Activated CD8-positive, alpha-beta T cell treated with anti-CD3 and anti-CD28 coated beads for 36 hours (primary cell): ENCODE measurements at regions of chr14 and their contacts with region 1.

Region 1: DNA sequence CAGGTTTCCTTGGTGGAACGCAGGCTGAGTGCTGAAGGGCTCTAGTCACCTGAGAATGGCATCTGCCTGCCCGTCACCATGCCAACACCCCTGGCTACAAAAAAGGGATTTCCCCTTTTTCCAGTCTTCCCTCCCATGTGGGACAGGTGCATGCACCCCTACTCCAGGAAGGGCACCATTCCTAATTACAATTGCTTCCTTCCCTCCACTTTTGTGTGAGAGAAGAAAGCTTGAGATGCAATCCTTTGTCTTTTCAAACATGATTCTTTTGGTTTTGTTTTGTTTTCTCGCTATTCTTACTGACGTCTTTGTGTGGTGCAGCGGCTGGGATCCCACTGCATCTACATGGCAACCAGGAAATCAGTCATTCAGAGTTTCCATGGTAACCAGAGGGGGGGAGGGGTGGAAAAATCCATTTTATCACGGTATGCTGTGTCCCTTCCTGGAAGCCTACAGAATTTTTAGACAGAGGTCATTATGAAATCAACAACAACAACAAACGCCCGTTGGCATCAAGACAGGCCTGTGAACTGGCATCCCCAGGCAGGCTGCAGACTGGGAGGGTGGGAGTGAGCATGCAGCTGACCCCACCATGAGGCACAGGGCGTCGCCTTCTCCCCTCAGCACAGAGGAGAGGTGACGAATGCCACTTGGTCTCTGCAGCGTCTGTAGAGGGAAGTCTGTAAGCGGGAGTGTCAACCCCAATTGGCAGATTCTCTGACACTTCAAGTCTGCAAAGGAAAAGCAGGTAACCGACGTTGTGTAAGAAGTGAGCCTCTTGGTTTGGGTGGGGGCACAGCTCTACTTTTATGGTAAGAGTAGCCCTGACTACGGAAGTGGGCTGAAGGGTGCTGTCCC is 13.6 kb upstream of the GNG2 start:
- DNase-seq: peak; percentile 95
- ATAC-seq: peak; percentile 76
- H3K4me3 Mint-ChIP-seq: peak overlapping the region; percentile 82
- H3K27ac Mint-ChIP-seq: peak overlapping the region; percentile 97
- H3K4me1 Mint-ChIP-seq: peaks cover 69% of the 10 kb centered on the region
- H3K27me3 Mint-ChIP-seq: no peaks in the 10 kb centered on the region
- CTCF ChIP-seq: no peak

Region 2: GRCh38 chr14:51816031-51816430 is 30.8 kb before region 1 on chr14:
- CTCF ChIA-PET with region 1: no interaction called
- POLR2A ChIA-PET with region 1: no interaction called
- intact Hi-C with region 1: no loop called
- DNase-seq: no peak
- ATAC-seq: no peak
- H3K4me3 Mint-ChIP-seq: no peak overlapping the region
- H3K27ac Mint-ChIP-seq: no peak overlapping the region
- H3K4me1 Mint-ChIP-seq: no peaks in the 10 kb centered on the region
- H3K27me3 Mint-ChIP-seq: no peaks in the 10 kb centered on the region
- CTCF ChIP-seq: no peak

Region 3: GRCh38 chr14:51860164-51860824 is 13.4 kb after region 1 on chr14 and contains the start of gene GNG2:
- CTCF ChIA-PET with region 1: interaction called, 7 read pairs
- POLR2A ChIA-PET with region 1: interaction called, 38 read pairs
- intact Hi-C with region 1: loop called (anchors 2 kb)
- DNase-seq: peak; percentile 91
- ATAC-seq: peak; percentile 95
- H3K4me3 Mint-ChIP-seq: peak within 1 kb of the TSS; percentile 98
- H3K27ac Mint-ChIP-seq: peak within 1 kb of the TSS; percentile 90
- H3K4me1 Mint-ChIP-seq: peaks cover 44% of the 10 kb centered on the region
- H3K27me3 Mint-ChIP-seq: no peaks in the 10 kb centered on the region
- CTCF ChIP-seq: no peak
- total RNA-seq, gene GNG2: 174 to 184 TPM

Region 4: DNA sequence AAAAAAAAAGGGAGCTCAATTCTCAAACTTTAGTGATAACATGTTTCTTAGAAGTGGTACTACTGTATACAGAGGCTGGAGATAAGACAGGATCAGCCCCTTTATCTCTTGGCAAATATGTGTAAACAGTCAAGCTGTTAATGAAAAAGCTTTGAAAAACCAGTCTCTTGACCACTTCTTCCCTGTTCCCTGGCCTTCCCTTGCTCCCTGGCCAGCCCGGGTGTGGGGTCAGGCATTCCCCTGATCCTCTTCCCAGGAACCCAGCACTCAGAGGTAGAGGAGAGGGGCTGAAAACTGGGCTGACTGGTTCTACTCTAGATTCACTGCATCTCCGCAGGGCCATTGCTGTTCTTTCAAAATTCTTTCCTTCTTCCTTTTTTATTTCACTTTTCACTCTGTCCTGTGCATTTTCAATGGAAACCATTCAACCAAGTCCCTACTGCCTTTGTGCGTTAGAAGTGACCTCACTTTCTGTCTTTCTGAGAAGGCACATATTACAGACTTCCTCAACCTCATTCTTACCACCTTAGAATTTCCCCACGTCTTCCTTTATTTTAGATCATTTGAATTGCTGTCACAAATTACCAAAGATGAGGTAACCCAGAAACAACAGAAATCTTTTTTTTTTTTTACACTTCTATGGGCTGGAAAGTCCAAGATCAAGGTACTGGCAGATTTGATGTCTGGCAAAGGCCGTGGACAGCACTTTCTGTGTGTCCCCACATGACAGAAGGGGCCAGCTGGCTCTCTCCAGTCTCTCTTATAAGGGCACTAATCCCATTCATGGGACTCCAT is 19.3 kb after region 1 on chr14:
- CTCF ChIA-PET with region 1: interaction called, 7 read pairs
- POLR2A ChIA-PET with region 1: interaction called, 38 read pairs
- intact Hi-C with region 1: loop called (anchors 2 kb)
- DNase-seq: peak; percentile 40
- ATAC-seq: peak; percentile 50
- H3K4me3 Mint-ChIP-seq: no peak overlapping the region
- H3K27ac Mint-ChIP-seq: no peak overlapping the region
- H3K4me1 Mint-ChIP-seq: peaks cover 22% of the 10 kb centered on the region
- H3K27me3 Mint-ChIP-seq: no peaks in the 10 kb centered on the region
- CTCF ChIP-seq: no peak

Region 5: DNA sequence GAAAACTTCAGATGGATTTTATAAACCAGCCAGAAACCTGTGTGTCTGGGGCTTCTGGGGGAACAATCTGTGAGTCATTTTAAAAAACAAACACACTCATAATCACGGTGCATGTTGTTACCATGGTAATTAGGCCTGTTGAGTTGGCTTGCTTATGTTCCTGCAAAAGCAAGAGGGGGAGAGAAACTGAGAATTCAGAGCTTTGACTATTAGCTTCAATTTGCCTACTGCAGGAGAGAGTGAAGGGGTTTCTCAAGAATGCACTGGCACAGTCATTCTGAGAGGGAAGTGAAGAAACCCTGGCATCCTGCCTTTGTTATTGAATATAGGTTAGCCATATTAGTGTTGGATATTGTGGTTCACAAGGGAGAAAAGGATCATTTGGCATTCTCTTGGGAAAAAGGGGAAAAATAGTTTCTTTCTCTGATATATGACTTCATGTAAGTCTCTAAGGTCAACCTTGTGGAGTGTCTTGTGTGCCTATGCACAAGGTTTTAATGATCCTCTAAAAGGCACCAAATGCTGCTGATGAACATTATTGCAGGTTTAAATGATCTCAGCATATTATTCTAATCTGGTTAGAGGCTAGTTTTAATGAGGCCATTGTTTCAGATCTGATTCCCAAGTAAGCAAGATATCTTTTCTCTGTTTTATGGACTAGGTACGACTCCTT is 26.5 kb after region 1 on chr14:
- CTCF ChIA-PET with region 1: interaction called, 5 read pairs
- POLR2A ChIA-PET with region 1: interaction called, 11 read pairs
- intact Hi-C with region 1: no loop called
- DNase-seq: peak; percentile 70
- ATAC-seq: peak; percentile 79
- H3K4me3 Mint-ChIP-seq: peak overlapping the region; percentile 30
- H3K27ac Mint-ChIP-seq: peak overlapping the region; percentile 91
- H3K4me1 Mint-ChIP-seq: peaks cover 66% of the 10 kb centered on the region
- H3K27me3 Mint-ChIP-seq: no peaks in the 10 kb centered on the region
- CTCF ChIP-seq: no peak

Region 6: GRCh38 chr14:51908086-51908485 is 61.2 kb after region 1 on chr14:
- CTCF ChIA-PET with region 1: interaction called, 7 read pairs
- POLR2A ChIA-PET with region 1: interaction called, 9 read pairs
- intact Hi-C with region 1: loop called (anchors 1 kb)
- DNase-seq: no peak
- ATAC-seq: no peak
- H3K4me3 Mint-ChIP-seq: no peak overlapping the region
- H3K27ac Mint-ChIP-seq: peak overlapping the region; percentile 48
- H3K4me1 Mint-ChIP-seq: peaks cover 66% of the 10 kb centered on the region
- H3K27me3 Mint-ChIP-seq: no peaks in the 10 kb centered on the region
- CTCF ChIP-seq: no peak